ENCODE measurements at regions of chr12 and their contacts with region 1.

Region 1: DNA sequence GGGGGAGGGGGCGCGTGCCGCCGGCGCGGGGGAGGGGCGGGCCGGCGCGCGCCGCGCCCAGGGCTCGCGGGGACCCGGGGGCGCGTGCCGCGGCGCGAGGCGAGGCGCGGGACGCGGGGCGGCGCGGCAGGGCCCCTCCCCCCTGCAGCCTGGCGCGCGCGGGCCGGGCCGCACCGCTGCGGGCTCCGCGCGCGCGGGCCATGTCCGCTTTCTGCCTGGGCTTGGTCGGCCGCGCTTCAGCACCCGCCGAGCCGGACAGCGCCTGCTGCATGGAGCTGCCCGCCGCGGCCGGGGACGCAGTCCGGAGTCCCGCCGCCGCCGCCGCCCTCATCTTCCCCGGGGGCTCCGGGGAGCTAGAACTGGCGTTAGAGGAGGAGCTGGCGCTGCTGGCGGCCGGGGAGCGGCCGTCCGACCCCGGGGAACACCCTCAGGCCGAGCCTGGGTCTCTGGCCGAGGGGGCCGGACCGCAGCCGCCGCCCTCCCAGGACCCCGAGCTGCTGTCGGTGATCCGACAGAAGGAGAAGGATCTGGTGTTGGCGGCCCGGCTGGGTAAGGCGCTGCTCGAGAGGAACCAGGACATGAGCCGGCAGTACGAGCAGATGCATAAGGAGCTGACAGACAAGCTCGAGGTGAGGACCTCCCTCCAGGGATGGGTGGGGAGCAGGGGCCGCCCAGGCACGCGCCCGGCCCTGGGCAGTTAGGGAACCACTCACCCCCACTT is 793 bp downstream of the BICDL1 start:
- DNase-seq: peak; percentile 49 to 89
- H3K4me3 ChIP-seq: peak overlapping the region; percentile 34
- H3K4me1 ChIP-seq: peaks cover 5% of the 10 kb centered on the region
- H3K27me3 ChIP-seq: peaks cover 36% of the 10 kb centered on the region

Region 2: GRCh38 chr12:120086801-120087621 is 97.2 kb after region 1 on chr12:
- in situ Hi-C with region 1: loop called (anchors 10 kb)
- DNase-seq: peak; percentile 97 to 99
- H3K4me3 ChIP-seq: peak overlapping the region; percentile 29
- H3K4me1 ChIP-seq: peaks cover 4% of the 10 kb centered on the region
- H3K27me3 ChIP-seq: no peaks in the 10 kb centered on the region